ENCODE measurements at regions of chr15 and their contacts with region 1.

Region 1: GRCh38 chr15:39874890-39875549 is 45.0 kb downstream of the GPR176 start:
- DNase-seq: peak; percentile 60
- H3K4me3 ChIP-seq: no peak overlapping the region
- H3K27ac ChIP-seq: no peak overlapping the region
- H3K4me1 ChIP-seq: no peaks in the 10 kb centered on the region
- H3K27me3 ChIP-seq: no peaks in the 10 kb centered on the region
- CTCF ChIP-seq: peak; percentile 80

Region 2: DNA sequence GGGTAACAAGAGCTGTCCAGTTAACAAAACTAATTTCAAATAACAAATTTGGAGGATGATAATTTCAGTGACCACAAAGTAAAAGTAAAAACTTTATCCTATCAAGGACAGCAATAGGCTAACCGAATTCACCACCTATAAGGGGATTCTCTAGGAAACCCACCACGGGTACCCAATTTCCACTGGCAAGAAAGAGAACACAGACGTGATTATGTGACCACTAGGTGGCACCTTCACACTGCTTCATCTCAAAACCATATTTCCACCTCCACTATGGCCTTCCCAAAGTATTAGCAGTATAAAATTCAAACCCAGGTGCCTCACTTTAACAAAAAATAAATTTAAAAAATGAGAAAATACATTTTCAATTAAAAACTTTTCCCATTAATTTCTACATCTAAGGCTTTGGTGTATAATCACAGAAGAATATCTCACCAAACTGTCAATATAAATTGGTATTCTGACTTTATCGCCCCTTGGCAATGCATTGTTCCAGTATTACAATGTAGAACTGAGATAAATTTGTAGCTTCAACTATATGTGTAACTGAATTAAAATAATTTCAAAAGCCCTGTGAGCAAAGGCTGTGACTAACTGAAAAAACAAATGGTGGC is 188.9 kb before region 1 on chr15:
- CTCF ChIA-PET with region 1: no interaction called
- POLR2A ChIA-PET with region 1: no interaction called
- intact Hi-C with region 1: loop called (anchors 10 kb)
- DNase-seq: peak; percentile 60
- H3K4me3 ChIP-seq: no peak overlapping the region
- H3K27ac ChIP-seq: no peak overlapping the region
- H3K4me1 ChIP-seq: no peaks in the 10 kb centered on the region
- H3K27me3 ChIP-seq: no peaks in the 10 kb centered on the region
- CTCF ChIP-seq: peak; percentile 84

Region 3: DNA sequence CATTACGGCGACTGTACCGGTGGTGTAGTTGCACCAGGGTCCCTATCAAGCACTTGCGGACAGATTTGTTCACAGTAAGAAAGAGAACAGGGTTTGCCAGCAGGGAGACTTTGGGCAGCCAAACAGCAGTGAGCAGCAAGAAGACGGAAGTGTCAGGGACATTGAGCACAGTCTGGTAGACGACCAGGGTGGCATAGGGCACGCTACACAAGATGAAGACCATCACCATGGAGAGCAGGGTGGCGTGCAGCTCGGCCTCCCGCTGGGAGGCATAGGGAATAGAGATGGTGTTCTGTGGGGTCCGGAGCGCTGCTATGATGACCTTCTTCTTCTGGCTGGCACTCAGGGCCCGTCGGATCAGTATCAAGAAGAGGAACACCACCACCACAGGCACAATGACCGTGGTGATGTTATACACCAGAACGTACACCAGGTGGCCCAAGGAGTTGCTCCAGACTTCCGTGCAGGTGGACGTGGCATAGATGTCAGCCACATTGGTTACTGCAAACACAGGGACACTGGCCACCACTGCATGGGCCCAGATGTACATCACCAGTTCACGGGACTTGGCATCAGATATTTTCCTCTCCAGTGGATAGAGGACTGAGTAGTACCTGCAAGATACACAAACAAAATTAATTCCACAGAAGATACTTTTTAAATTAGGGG is 73.2 kb before region 1 on chr15:
- CTCF ChIA-PET with region 1: interaction called, 3 read pairs
- POLR2A ChIA-PET with region 1: no interaction called
- intact Hi-C with region 1: loop called (anchors 1 kb)
- DNase-seq: peak; percentile 41
- H3K4me3 ChIP-seq: no peak overlapping the region
- H3K27ac ChIP-seq: no peak overlapping the region
- H3K4me1 ChIP-seq: no peaks in the 10 kb centered on the region
- H3K27me3 ChIP-seq: no peaks in the 10 kb centered on the region
- CTCF ChIP-seq: peak; percentile 57

Measured in A673 (cell line).